ENCODE measurements at regions of chr2 and their contacts with region 1.

Region 1: DNA sequence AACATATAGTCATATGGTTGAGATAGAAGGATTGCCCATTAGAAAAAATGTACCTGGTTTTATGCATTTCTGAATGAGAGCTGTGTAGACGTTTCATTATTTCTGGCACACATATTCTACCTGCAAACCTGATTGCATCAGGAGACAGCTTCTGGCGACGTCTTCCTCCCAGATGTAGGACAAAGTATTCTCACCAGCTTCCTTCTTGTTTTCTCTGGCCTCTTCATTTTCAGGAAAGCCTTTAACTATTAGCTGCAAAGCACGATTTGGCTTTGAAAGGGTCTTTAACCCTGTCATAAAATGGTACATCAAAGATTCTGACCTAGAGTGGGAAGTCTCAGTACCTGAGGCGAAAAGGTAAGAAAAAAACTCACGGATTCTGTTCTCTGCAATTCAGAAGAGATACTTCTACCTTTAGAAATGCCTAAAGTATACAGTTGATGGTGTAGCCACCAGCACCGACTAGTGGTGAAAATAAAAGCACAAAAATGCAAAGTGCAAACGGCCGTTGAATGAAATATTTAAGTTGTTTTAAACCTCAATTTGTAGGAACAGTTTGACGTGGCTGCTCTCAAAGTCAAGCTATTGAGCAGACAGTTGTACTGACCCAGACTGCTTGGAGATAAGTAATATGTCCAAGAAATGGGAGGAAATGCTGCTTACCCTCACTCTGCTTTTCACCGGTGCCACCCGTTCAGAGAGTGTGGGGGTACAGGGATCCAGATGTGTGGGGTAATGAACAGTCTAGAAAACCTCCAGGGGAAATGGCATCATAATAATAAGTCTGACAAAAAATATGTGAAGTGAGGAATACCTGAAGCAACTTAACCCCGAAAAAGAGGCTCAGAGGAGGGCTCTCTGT is 20.2 kb downstream of the IL18RAP start:
- DNase-seq: peak in 1 of 2 experiments; percentile 42
- H3K4me3 ChIP-seq: no peak overlapping the region
- H3K4me3 Mint-ChIP-seq: no peak overlapping the region
- H3K27ac Mint-ChIP-seq: no peak overlapping the region
- H3K4me1 ChIP-seq: no peaks in the 10 kb centered on the region
- H3K4me1 Mint-ChIP-seq: no peaks in the 10 kb centered on the region
- H3K27me3 ChIP-seq: no peaks in the 10 kb centered on the region; the same call in 1 of the 2 replicates
- H3K27me3 Mint-ChIP-seq: no peaks in the 10 kb centered on the region
- CTCF ChIP-seq: peak; percentile 66 to 69

Region 2: DNA sequence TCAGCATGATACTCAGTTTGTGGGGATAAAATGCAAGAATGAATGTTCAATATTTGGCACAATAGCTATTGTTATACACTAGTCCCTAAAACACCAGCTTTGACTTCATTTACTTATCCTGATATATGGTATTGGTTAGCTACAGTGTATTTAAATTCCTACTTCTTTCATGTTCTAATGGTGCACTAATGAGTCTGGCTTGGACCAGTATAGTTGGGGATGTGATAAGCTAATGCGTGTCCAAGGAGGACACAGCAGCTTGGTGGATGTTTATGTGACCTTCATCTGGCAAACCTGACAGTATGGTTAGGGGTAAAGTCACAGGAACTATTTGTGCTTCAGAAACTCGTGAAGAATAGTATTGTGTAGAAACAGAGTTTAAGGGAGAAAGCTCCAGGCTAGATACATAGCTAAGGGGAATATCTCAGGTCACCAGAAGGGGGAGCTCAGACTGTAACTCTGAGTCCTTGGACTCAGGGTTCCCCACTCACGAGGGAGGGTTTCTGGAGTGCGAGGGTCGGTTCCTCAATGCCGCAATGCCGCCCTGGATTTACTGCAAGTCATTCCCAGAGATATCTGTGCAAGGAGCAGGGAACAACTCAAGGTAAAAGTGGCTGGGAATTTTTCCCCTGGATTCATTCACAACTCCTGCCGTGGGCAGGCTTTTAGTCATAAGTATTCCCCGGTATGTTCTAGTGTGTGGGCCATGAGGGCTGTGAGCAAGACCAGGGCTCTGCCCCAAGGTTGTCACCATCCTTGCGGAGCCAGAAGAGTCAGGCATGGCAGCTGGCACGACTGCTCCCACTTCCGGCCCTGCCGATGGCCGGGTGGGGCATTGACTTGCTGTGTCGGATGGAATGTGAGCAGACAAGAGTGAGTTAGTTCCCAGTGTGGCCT is 437.0 kb before region 1 on chr2:
- CTCF ChIA-PET with region 1: no interaction called
- POLR2A ChIA-PET with region 1: no interaction called
- intact Hi-C with region 1: loop called (anchors 5 kb)
- DNase-seq: peak; percentile 65 to 70
- H3K4me3 ChIP-seq: no peak overlapping the region
- H3K4me3 Mint-ChIP-seq: no peak overlapping the region
- H3K27ac Mint-ChIP-seq: no peak overlapping the region
- H3K4me1 ChIP-seq: peaks cover 17% of the 10 kb centered on the region
- H3K4me1 Mint-ChIP-seq: no peaks in the 10 kb centered on the region
- H3K27me3 ChIP-seq: no peaks in the 10 kb centered on the region
- H3K27me3 Mint-ChIP-seq: no peaks in the 10 kb centered on the region
- CTCF ChIP-seq: peak; percentile 71 to 73

Region 3: GRCh38 chr2:102355526-102356380 is 87.4 kb before region 1 on chr2 and contains the start of gene IL18R1:
- CTCF ChIA-PET with region 1: no interaction called
- POLR2A ChIA-PET with region 1: no interaction called
- intact Hi-C with region 1: loop called (anchors 2 kb)
- DNase-seq: peak; percentile 62 to 86
- H3K4me3 ChIP-seq: peak within 1 kb of the TSS; percentile 39
- H3K4me3 Mint-ChIP-seq: peak within 1 kb of the TSS; percentile 79
- H3K27ac Mint-ChIP-seq: peak within 1 kb of the TSS; percentile 24
- H3K4me1 ChIP-seq: no peaks in the 10 kb centered on the region
- H3K4me1 Mint-ChIP-seq: peaks cover 5% of the 10 kb centered on the region
- H3K27me3 ChIP-seq: no peaks in the 10 kb centered on the region
- H3K27me3 Mint-ChIP-seq: peaks cover 16% of the 10 kb centered on the region
- CTCF ChIP-seq: peak; percentile 74 to 76
- total RNA-seq, gene IL18R1: not detected in 2 replicates